ENCODE measurements at regions of chr1 and their contacts with region 1.

Region 1: GRCh38 chr1:36149237-36149972 is at the start of gene TRAPPC3:
- DNase-seq: peak; percentile 100
- ATAC-seq: peak; percentile 93
- H3K4me3 Mint-ChIP-seq: peak within 1 kb of the TSS; percentile 95
- H3K27ac Mint-ChIP-seq: peak within 1 kb of the TSS; percentile 94
- H3K4me1 Mint-ChIP-seq: peaks cover 67% of the 10 kb centered on the region
- H3K27me3 Mint-ChIP-seq: no peaks in the 10 kb centered on the region
- total RNA-seq, gene TRAPPC3: 43.8 to 53.8 TPM

Region 2: DNA sequence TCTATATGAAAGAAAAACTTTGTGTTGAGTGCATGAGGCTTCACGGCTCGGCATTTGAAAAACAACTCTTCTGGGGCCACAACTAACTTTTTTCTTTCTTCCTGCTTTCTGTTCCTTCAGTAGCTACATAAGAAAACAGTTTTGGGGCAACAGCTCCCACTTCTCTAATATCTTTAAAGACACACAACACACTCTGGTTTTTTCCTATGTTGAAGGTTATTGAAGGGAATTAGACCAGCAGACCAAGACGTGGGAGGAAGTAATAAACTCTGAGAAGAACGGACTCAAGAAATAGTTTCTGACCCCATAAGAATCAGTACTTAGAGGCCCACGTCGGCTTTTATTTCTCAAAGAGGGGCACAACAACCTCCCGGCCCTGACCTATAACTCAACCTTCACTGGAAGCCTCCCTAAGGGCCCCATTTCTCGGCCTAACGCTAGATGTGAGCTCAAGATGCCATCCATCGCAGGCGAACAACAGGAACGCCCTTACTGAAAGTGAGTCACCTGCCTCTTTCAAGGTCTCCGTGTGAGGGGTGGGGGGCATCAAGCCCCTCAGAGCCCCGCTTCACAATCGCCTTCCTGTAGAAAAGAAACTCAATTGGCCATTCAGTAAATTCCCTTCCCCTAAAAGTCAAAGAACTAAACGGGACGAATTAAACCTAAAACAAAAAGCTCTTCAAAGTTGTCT is 1118.5 kb before region 1 on chr1:
- CTCF ChIA-PET with region 1: no interaction called
- POLR2A ChIA-PET with region 1: no interaction called
- intact Hi-C with region 1: loop called in 1 of 2 experiments (anchors 5 kb)
- DNase-seq: peak; percentile 63
- ATAC-seq: peak; percentile 70
- H3K4me3 Mint-ChIP-seq: peak overlapping the region; percentile 92
- H3K27ac Mint-ChIP-seq: peak overlapping the region; percentile 92
- H3K4me1 Mint-ChIP-seq: peaks cover 33% of the 10 kb centered on the region
- H3K27me3 Mint-ChIP-seq: no peaks in the 10 kb centered on the region

Region 3: GRCh38 chr1:36099681-36100341 is 49.6 kb before region 1 on chr1:
- CTCF ChIA-PET with region 1: interaction called, 14 read pairs
- POLR2A ChIA-PET with region 1: interaction called, 6 read pairs
- intact Hi-C with region 1: loop called in 1 of 2 experiments (anchors 1 kb)
- DNase-seq: peak; percentile 87
- ATAC-seq: peak; percentile 95
- H3K4me3 Mint-ChIP-seq: no peak overlapping the region
- H3K27ac Mint-ChIP-seq: peak overlapping the region; percentile 10
- H3K4me1 Mint-ChIP-seq: no peaks in the 10 kb centered on the region
- H3K27me3 Mint-ChIP-seq: no peaks in the 10 kb centered on the region

Region 4: DNA sequence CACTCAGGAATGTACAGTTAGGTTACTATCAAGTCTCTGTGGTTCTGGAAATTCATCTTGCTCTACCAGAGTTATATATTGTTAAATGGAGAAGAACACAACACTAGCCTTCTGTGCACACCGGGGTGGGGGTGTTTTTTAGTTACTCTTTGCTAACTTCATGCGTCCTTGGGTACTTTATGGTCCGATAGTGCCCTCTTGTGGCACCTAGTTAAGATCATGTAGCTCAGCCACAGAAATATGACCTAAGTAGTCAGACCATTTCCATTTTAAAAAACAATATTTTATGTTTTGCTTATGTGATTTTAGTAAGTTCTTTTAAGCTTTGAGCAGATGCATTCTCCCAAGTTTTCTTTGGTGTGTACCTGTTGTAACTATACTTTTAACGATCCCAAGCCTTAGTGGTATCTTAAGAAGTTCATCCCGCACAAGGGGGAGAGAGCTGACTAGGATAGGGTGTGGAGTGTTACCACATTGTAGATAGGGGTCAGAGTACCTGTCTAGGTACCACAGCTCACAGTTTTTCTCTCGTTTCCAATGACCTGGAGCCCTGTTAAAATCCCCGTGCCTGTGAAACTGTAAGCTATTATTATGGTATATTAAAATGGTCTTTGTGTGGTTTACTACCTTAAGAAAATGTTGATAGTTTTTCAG is 136.2 kb after region 1 on chr1:
- CTCF ChIA-PET with region 1: interaction called, 46 read pairs
- POLR2A ChIA-PET with region 1: no interaction called
- intact Hi-C with region 1: loop called (anchors 1 kb)
- DNase-seq: peak; percentile 78
- ATAC-seq: peak; percentile 78
- H3K4me3 Mint-ChIP-seq: no peak overlapping the region
- H3K27ac Mint-ChIP-seq: peak overlapping the region; percentile 82
- H3K4me1 Mint-ChIP-seq: peaks cover 35% of the 10 kb centered on the region
- H3K27me3 Mint-ChIP-seq: no peaks in the 10 kb centered on the region

Region 5: DNA sequence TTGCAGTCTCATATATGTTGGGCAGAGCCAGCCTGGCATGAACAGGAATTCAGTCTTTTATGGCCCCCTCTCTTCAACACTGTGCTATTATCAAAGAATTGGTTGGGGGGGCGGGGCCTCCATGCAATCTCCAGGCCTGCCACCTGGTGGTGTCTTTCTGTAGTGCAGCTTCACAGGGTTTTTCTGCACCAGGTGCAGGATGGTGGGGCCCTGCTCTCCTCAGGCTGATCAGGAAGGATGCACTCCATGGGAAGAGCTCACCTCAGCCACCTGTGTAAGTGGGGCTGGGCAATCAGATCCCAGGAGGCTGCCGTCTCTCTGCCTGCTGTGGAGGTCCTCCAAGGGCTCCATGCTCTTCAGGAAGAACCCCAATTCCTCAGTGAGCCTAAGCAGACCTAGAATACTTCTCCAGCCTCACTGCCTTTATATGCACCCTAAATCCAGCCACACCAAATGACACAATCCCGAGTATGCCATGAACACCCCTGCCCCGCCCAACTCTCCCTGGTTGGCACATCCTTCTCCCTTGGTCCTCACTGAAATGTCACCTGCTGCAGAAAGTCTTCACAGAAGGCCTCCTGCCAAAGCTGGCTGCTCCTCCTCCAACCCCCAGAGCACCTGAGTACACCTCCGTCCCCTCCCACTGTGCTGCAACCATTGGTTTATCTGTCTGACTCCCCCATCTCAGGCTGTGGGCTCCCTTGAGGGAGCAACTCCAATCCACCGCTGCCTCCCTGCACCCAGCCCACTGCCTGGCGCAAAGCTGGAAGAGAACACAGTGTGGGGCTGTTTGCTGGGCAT is 219.9 kb after region 1 on chr1:
- CTCF ChIA-PET with region 1: interaction called, 4 read pairs
- POLR2A ChIA-PET with region 1: interaction called, 3 read pairs
- intact Hi-C with region 1: loop called in 1 of 2 experiments (anchors 1 kb)
- DNase-seq: peak; percentile 92
- ATAC-seq: peak; percentile 35
- H3K4me3 Mint-ChIP-seq: no peak overlapping the region
- H3K27ac Mint-ChIP-seq: peak overlapping the region; percentile 76
- H3K4me1 Mint-ChIP-seq: peaks cover 69% of the 10 kb centered on the region
- H3K27me3 Mint-ChIP-seq: no peaks in the 10 kb centered on the region

Region 6: DNA sequence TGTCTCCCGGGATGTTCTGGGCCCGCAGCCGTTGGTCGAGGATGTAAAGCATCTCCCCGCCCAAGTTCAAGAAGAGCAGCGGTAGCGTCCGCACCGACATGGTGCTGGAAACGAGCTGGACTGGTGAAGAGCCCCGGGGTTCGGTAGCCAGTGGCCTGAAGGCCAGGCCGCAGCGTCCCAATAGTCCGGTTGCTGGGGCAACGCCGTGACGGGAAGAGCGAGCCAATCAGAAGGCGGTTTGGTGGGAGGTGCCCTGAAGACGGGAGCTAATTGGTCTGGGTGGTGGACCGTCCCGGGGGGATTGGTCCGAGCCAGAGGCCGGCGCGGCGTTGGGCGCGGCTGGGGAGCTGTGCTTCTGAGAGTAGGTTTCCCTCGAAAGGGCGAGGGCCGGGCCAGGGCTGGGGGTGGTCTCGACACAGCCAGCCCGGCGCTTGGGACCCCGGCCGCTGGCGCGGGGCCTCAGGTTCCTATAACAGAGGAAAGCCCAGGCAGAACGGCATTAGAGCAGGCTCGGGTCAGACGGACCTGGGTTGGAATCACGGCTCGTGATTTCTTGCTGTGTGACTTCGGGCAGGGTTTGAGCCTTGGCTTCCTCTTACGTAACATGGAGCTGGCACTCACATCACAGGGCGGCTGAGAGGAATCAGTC is 301.0 kb after region 1 on chr1 and contains the start of gene OSCP1:
- CTCF ChIA-PET with region 1: no interaction called
- POLR2A ChIA-PET with region 1: interaction called, 3 read pairs
- intact Hi-C with region 1: loop called in 1 of 2 experiments (anchors 1 kb)
- DNase-seq: peak; percentile 91
- ATAC-seq: peak; percentile 98
- H3K4me3 Mint-ChIP-seq: peak within 1 kb of the TSS; percentile 83
- H3K27ac Mint-ChIP-seq: peak within 1 kb of the TSS; percentile 83
- H3K4me1 Mint-ChIP-seq: peaks cover 16% of the 10 kb centered on the region
- H3K27me3 Mint-ChIP-seq: no peaks in the 10 kb centered on the region
- total RNA-seq, gene OSCP1: 2.2 to 2.8 TPM

Measured in activated CD4-positive, alpha-beta T cell treated with anti-CD3 and anti-CD28 coated beads for 36 hours (primary cell).